ENCODE measurements at regions of chr15 and their contacts with region 1.

Region 1: GRCh38 chr15:68730471-68730919 is 90.2 kb downstream of the ANP32A start:
- DNase-seq: peak; percentile 51
- ATAC-seq: peak; percentile 65
- H3K4me3 ChIP-seq: no peak overlapping the region
- H3K27ac ChIP-seq: no peak overlapping the region
- H3K4me1 ChIP-seq: peaks cover 5% of the 10 kb centered on the region
- H3K27me3 ChIP-seq: peaks cover 19% of the 10 kb centered on the region
- CTCF ChIP-seq: peak; percentile 52
- POLR2A ChIP-seq: no peak
- RAD21 ChIP-seq: peak; percentile 63

Region 2: GRCh38 chr15:68204776-68205557 is 525.5 kb before region 1 on chr15 and contains the start of gene CALML4:
- CTCF ChIA-PET with region 1: no interaction called
- POLR2A ChIA-PET with region 1: no interaction called
- dilution Hi-C with region 1: no loop called
- in situ Hi-C with region 1: no loop called
- intact Hi-C with region 1: no loop called
- DNase-seq: no peak
- ATAC-seq: peak; percentile 22
- H3K4me3 ChIP-seq: no peak within 1 kb of the TSS
- H3K27ac ChIP-seq: no peak within 1 kb of the TSS
- H3K4me1 ChIP-seq: peaks cover 3% of the 10 kb centered on the region; the same call in 1 of the 2 replicates
- H3K27me3 ChIP-seq: no peaks in the 10 kb centered on the region
- CTCF ChIP-seq: no peak
- POLR2A ChIP-seq: no peak
- RAD21 ChIP-seq: no peak
- total RNA-seq, gene CALML4: 0.36 and 0.56 TPM in 2 replicates

Region 3: GRCh38 chr15:68783226-68784058 is 52.9 kb after region 1 on chr15:
- CTCF ChIA-PET with region 1: no interaction called
- POLR2A ChIA-PET with region 1: no interaction called
- dilution Hi-C with region 1: no loop called
- in situ Hi-C with region 1: no loop called
- intact Hi-C with region 1: no loop called
- DNase-seq: no peak
- ATAC-seq: no peak
- H3K4me3 ChIP-seq: no peak overlapping the region
- H3K27ac ChIP-seq: no peak overlapping the region
- H3K4me1 ChIP-seq: no peaks in the 10 kb centered on the region
- H3K27me3 ChIP-seq: no peaks in the 10 kb centered on the region
- CTCF ChIP-seq: peak; percentile 48
- POLR2A ChIP-seq: no peak
- RAD21 ChIP-seq: peak; percentile 54

Region 4: GRCh38 chr15:68795298-68795848 is 64.9 kb after region 1 on chr15:
- CTCF ChIA-PET with region 1: no interaction called
- POLR2A ChIA-PET with region 1: no interaction called
- dilution Hi-C with region 1: no loop called
- in situ Hi-C with region 1: loop called (anchors 10 kb)
- intact Hi-C with region 1: no loop called
- DNase-seq: peak; percentile 57
- ATAC-seq: peak; percentile 93
- H3K4me3 ChIP-seq: no peak overlapping the region
- H3K27ac ChIP-seq: no peak overlapping the region
- H3K4me1 ChIP-seq: peaks cover 10% of the 10 kb centered on the region
- H3K27me3 ChIP-seq: no peaks in the 10 kb centered on the region
- CTCF ChIP-seq: no peak
- POLR2A ChIP-seq: no peak
- RAD21 ChIP-seq: no peak

Region 5: GRCh38 chr15:68820295-68821189 is 90.0 kb after region 1 on chr15 and contains the start of gene ANP32A:
- CTCF ChIA-PET with region 1: no interaction called
- POLR2A ChIA-PET with region 1: no interaction called
- dilution Hi-C with region 1: no loop called
- in situ Hi-C with region 1: no loop called
- intact Hi-C with region 1: loop called (anchors 5 kb)
- DNase-seq: peak; percentile 91
- ATAC-seq: peak; percentile 79
- H3K4me3 ChIP-seq: peak within 1 kb of the TSS; percentile 78
- H3K27ac ChIP-seq: peak within 1 kb of the TSS; percentile 87
- H3K4me1 ChIP-seq: peaks cover 9% of the 10 kb centered on the region
- H3K27me3 ChIP-seq: no peaks in the 10 kb centered on the region
- CTCF ChIP-seq: no peak
- POLR2A ChIP-seq: no peak
- RAD21 ChIP-seq: no peak
- total RNA-seq, gene ANP32A: 50.0 and 72.8 TPM in 2 replicates

Region 6: DNA sequence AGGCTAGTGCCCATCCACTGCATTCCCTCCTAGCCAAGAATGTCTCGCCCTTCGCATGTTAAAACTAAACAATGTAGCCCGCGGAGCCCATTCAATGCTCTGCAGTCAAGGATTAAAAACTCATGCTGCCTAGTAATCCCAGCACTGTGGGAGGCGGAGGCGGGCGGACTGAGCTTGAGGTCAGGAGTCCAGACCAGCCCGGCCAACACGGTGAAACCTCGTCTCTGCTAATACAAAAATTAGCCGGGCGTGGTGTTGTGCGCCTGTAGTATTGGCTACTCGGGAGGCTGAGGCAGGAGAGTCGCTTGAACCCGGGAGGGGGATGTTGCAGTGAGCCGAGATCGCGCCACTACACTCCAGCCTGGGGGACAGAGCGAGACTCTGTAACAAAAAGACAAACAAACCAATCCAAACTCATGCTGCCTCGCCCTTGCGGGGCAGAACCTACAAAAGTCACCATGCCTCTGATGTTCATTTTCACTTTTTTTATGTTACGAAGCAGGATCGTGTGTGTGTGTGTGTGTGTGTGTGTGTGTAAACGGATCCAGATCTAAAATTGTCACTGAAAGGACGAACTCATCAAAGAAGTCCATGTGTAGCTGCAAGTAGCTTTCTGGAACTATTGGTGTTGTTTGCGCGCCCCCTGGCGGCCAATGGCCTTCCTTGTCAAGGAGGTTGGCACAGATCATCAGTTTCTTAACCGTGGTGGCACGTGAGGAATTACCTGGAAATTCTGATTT is 145.1 kb after region 1 on chr15:
- CTCF ChIA-PET with region 1: interaction called, 3 read pairs
- POLR2A ChIA-PET with region 1: interaction called, 4 read pairs
- dilution Hi-C with region 1: no loop called
- in situ Hi-C with region 1: loop called (anchors 5 kb)
- intact Hi-C with region 1: loop called (anchors 1 kb)
- DNase-seq: peak; percentile 88
- ATAC-seq: peak; percentile 92
- H3K4me3 ChIP-seq: peak overlapping the region; percentile 28
- H3K27ac ChIP-seq: no peak overlapping the region
- H3K4me1 ChIP-seq: no peaks in the 10 kb centered on the region
- H3K27me3 ChIP-seq: peaks cover 24% of the 10 kb centered on the region
- CTCF ChIP-seq: peak; percentile 92
- POLR2A ChIP-seq: no peak
- RAD21 ChIP-seq: peak; percentile 96

Region 7: GRCh38 chr15:68888419-68888818 is 157.9 kb after region 1 on chr15:
- CTCF ChIA-PET with region 1: no interaction called
- POLR2A ChIA-PET with region 1: no interaction called
- dilution Hi-C with region 1: no loop called
- in situ Hi-C with region 1: no loop called
- intact Hi-C with region 1: no loop called
- DNase-seq: no peak
- ATAC-seq: no peak
- H3K4me3 ChIP-seq: no peak overlapping the region
- H3K27ac ChIP-seq: no peak overlapping the region
- H3K4me1 ChIP-seq: no peaks in the 10 kb centered on the region
- H3K27me3 ChIP-seq: peaks cover 25% of the 10 kb centered on the region
- CTCF ChIP-seq: no peak
- POLR2A ChIP-seq: no peak
- RAD21 ChIP-seq: no peak

Region 8: DNA sequence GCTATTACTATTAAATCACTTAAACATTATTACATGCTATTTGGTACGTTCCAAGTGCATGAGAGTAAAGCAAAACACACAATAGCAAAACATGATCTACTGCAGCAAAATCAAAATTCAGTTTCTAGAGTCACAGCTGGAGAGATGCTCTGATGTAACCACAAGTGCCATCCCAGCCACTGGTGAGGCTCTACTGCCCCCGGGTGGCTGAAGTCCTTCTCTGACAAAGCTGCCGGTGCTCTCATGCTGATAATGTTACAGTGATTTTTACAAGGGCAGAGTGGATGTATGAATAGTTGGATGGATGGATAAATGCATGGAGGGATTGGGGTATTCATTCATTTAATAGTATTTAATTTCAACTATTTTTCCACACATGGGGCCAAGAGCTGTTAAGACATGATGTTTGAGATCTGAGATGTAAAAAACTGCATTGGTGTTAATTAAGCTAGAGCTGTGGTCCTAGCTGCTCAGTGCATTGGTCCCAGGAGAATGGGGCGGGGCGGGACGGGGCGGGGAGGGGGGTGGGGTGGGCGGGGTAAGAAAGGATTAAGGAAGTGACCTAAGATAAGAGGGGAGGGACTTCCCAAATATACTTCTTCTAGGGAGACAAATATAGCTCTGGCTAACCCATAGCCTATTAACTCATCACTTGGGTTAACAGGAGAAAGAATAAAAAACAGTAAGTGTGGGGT is 194.5 kb after region 1 on chr15:
- CTCF ChIA-PET with region 1: interaction called, 4 read pairs
- POLR2A ChIA-PET with region 1: no interaction called
- dilution Hi-C with region 1: no loop called
- in situ Hi-C with region 1: no loop called
- intact Hi-C with region 1: loop called (anchors 2 kb)
- DNase-seq: peak; percentile 71
- ATAC-seq: peak; percentile 98
- H3K4me3 ChIP-seq: no peak overlapping the region
- H3K27ac ChIP-seq: no peak overlapping the region
- H3K4me1 ChIP-seq: no peaks in the 10 kb centered on the region
- H3K27me3 ChIP-seq: peaks cover 15% of the 10 kb centered on the region
- CTCF ChIP-seq: peak; percentile 93
- POLR2A ChIP-seq: no peak
- RAD21 ChIP-seq: peak; percentile 95

Region 9: DNA sequence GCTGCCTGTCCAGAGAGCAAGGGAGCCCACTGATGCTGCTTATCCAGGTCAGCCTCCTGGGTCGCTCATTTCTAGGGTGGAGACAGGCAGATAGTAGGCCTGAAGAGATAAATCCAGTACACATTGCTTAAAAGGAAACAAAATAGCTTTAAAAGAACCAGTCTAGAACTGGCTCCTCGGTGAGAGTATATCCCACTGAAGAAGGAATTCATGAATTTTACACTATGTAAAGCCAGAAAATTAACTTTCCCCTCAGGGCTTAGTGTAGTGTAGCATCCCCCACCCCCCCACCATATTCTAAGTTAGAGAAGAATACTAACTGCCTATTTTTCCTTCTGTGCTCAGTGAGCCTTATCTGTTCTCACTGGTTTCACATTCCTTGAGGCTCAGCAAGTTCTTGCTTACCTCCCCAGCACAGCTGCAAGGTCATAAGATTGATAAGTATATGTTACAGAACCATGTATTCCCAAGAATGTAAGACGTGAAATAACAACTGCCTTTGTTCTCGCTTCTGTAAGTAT is 253.5 kb after region 1 on chr15:
- CTCF ChIA-PET with region 1: no interaction called
- POLR2A ChIA-PET with region 1: no interaction called
- dilution Hi-C with region 1: no loop called
- in situ Hi-C with region 1: no loop called
- intact Hi-C with region 1: no loop called
- DNase-seq: peak; percentile 16
- ATAC-seq: no peak
- H3K4me3 ChIP-seq: no peak overlapping the region
- H3K27ac ChIP-seq: no peak overlapping the region
- H3K4me1 ChIP-seq: no peaks in the 10 kb centered on the region
- H3K27me3 ChIP-seq: peaks cover 28% of the 10 kb centered on the region
- CTCF ChIP-seq: no peak
- POLR2A ChIP-seq: no peak
- RAD21 ChIP-seq: no peak

Measured in IMR-90 (cell line).